Breast epithelium (tissue), 4 donors: ENCODE measurements at regions of chr4 and their contacts with region 1.

Region 1: DNA sequence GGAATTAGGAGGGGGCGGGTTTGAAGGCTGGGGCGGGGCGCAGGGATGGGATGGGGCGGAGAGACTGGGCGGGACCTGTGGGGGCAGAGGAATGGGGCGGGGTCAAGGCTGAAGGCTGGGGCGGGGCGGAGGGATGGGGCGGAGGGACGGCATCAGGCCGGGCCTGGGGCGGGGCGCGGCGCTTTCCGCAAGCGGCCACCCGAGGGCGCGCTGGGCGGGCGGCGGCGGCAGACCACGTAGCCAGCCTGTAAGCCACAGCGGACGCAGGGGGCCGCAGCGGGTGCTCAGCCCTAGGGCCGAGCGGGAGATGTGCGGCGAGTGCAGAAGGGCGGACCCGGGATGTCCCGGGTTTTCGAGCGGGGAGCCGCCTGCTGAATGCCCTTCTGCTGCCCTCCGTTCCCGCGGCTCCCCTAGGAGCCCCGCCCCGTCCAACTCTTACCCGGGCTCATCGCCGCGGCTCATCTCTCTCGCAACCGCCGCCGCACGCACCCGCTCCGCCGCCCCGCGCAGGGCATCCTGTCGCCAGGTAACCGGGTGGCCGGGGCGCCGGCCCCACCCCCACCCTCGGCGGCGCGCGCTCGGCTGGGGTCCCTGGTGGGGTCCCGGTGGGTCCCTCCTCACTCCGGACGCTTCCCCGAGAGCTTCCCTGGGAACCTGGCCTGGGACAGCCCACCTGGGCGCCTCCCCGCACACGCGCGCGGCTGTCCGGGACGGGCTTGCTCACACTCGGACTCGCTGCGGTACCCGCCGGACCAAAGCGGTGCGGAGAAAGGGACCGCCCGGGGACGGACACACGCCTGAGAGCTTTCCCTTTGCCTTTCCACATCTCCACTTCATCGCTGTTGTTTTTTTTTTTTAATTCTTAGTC is at the start of gene CCDC110:
- DNase-seq: peak; percentile 81 to 98
- H3K4me3 ChIP-seq: peak within 1 kb of the TSS; percentile 83 to 96 (median 92)
- H3K27ac ChIP-seq: peak within 1 kb of the TSS; percentile 85 to 86
- H3K4me1 ChIP-seq: no peaks in the 10 kb centered on the region
- H3K27me3 ChIP-seq: no peaks in the 10 kb centered on the region
- CTCF ChIP-seq: peak in 2 of 3 donors; percentile 35 to 71
- POLR2A ChIP-seq: no peak
- total RNA-seq, gene CCDC110: 1.3 to 4.1 (median 1.3) TPM

Region 2: DNA sequence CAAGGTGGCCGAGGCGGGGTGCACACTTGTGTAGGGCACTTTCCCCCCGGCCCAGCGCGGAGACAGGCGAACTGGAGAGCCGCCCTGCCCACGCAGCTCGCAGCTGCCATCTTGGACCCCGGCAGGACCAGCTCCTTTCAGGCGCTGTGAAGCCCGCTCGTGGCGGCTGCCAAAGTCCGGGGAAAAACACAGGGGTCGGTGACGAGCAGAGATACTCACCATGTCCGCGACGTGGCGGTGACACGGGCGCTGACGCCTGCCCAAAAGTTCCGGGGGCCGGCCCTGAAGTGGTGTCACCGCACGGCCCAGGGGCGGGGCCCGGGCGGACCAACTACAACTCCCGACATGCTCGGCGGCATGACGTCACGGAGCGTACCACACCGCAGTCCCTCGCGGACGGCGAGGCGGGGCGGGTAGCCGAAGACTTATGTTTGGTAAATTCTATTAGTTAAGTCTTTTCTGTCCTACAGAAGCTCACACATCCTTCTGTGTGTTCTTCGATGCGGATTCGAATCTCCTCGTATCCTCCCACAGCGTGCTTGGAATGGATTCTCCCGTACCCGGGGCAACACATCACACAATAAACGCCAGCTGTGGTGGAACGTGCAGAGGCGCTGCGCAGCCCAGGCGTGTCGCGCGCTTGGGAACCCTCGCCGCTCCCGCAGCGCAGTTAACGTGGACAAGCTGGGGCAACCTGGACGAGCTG is 45.7 kb before region 1 on chr4 and contains the start of gene UFSP2:
- intact Hi-C with region 1: no loop called
- DNase-seq: peak; percentile 88 to 90
- H3K4me3 ChIP-seq: peak within 1 kb of the TSS; percentile 73 to 83 (median 78)
- H3K27ac ChIP-seq: peak within 1 kb of the TSS; percentile 92 to 99
- H3K4me1 ChIP-seq: no peaks in the 10 kb centered on the region
- H3K27me3 ChIP-seq: no peaks in the 10 kb centered on the region
- CTCF ChIP-seq: peak in 1 of 3 donors; percentile 9
- POLR2A ChIP-seq: peak; percentile 46
- total RNA-seq, gene UFSP2: 20.6 to 48.3 (median 37.9) TPM

Region 3: GRCh38 chr4:185437809-185438208 is 33.7 kb before region 1 on chr4:
- intact Hi-C with region 1: no loop called
- DNase-seq: no peak
- H3K4me3 ChIP-seq: no peak overlapping the region
- H3K27ac ChIP-seq: no peak overlapping the region
- H3K4me1 ChIP-seq: no peaks in the 10 kb centered on the region
- H3K27me3 ChIP-seq: no peaks in the 10 kb centered on the region
- CTCF ChIP-seq: no peak
- POLR2A ChIP-seq: no peak

Region 4: GRCh38 chr4:185597532-185598188 is 126.2 kb after region 1 on chr4:
- intact Hi-C with region 1: loop called (anchors 10 kb)
- DNase-seq: peak; percentile 69 to 80
- H3K4me3 ChIP-seq: no peak overlapping the region
- H3K27ac ChIP-seq: no peak overlapping the region
- H3K4me1 ChIP-seq: no peaks in the 10 kb centered on the region
- H3K27me3 ChIP-seq: no peaks in the 10 kb centered on the region
- CTCF ChIP-seq: peak; percentile 90 to 98 (median 97)
- POLR2A ChIP-seq: no peak